ENCODE measurements at regions of chr10 and their contacts with region 1.

Region 1: GRCh38 chr10:12299222-12299965 is 50.0 kb upstream of the CAMK1D start:
- DNase-seq: no peak
- ATAC-seq: no peak
- H3K4me3 ChIP-seq: no peak overlapping the region
- H3K27ac ChIP-seq: no peak overlapping the region
- H3K4me1 ChIP-seq: no peaks in the 10 kb centered on the region
- H3K27me3 ChIP-seq: no peaks in the 10 kb centered on the region
- CTCF ChIP-seq: no peak

Region 2: GRCh38 chr10:12587451-12587888 is 288.1 kb after region 1 on chr10:
- CTCF ChIA-PET with region 1: no interaction called
- POLR2A ChIA-PET with region 1: interaction called, 13 read pairs
- in situ Hi-C with region 1: no loop called
- intact Hi-C with region 1: no loop called
- DNase-seq: no peak
- ATAC-seq: no peak
- H3K4me3 ChIP-seq: no peak overlapping the region
- H3K27ac ChIP-seq: no peak overlapping the region
- H3K4me1 ChIP-seq: no peaks in the 10 kb centered on the region
- H3K27me3 ChIP-seq: no peaks in the 10 kb centered on the region
- CTCF ChIP-seq: no peak

Measured in Panc1 (cell line).